PC-3 (cell line): ENCODE measurements at regions of chr5 and their contacts with region 1.

Region 1: DNA sequence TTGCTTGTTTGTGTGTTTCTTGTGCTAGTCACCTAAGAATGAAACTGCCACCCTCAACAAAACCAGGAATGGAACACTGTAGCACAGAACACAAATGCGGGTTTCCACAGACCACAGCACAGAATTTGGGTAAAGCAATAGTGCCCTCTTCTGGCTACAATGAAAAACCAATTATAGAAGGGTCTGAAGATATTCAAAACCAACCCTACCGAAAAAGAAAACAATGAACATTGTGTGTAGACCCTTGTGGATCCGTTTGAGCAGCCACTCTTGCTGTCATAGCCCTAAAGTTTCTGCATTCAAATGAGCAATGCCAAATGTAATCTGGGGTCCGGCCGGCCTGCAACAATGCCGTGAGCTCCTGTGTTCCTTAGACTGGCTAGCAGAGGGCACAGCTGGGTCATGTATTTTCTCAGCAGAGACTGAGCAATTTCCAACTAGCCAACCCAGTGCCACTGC is 8.3 kb upstream of the ENC1 start:
- DNase-seq: peak; percentile 71
- ATAC-seq: peak; percentile 94
- H3K4me3 ChIP-seq: peak overlapping the region; percentile 38; the same call in 1 of the 2 replicates
- H3K27ac ChIP-seq: no peak overlapping the region
- H3K4me1 ChIP-seq: peaks cover 21% of the 10 kb centered on the region
- H3K27me3 ChIP-seq: no peaks in the 10 kb centered on the region
- CTCF ChIP-seq: peak; percentile 81

Region 2: DNA sequence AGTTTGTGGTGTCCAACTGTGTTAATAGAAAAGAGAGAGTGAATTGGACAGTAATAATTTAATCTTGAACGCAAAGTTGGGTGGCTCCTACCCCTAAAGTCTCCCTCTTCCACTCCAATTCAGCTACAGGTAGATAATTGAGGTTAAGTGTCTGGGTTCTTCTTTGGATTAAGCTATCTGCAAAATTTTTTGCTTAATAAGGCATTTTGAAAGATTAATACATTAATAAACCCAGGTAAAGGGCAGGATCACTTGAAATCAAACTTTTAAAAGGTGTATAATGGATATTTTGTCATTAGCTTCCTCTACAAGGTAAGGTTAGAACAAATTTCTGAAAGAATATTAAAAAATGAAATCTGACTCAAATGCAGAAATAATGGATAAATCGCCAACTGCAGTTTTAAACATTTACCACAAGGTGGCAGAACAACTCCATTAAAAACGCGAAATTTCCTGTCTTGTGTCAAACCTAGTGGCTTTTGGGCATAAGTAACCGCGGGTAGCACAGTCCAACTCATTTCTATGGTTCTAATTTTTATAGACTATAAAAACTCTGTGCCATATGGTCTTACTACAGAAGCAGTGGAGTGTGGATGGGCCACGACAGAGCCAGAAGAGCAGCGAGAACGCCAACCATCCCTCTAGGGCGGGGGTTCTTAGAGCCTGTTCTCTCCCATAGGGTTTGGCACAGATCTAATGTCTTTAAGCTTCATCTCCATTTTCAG is 746.4 kb before region 1 on chr5:
- CTCF ChIA-PET with region 1: no interaction called
- POLR2A ChIA-PET with region 1: no interaction called
- intact Hi-C with region 1: loop called (anchors 1 kb)
- DNase-seq: peak; percentile 68
- ATAC-seq: peak; percentile 45; the same call in 1 of the 2 replicates
- H3K4me3 ChIP-seq: no peak overlapping the region
- H3K27ac ChIP-seq: no peak overlapping the region
- H3K4me1 ChIP-seq: no peaks in the 10 kb centered on the region
- H3K27me3 ChIP-seq: no peaks in the 10 kb centered on the region
- CTCF ChIP-seq: peak; percentile 76